ENCODE measurements at regions of chr18 and their contacts with region 1.

Region 1: GRCh38 chr18:12254136-12254829 is at the start of gene CIDEA:
- DNase-seq: no peak
- H3K4me3 ChIP-seq: peak within 1 kb of the TSS in 2 of 3 experiments; percentile 31 to 33
- H3K27ac ChIP-seq: peak within 1 kb of the TSS; percentile 62
- H3K4me1 ChIP-seq: peaks cover 46% of the 10 kb centered on the region
- H3K27me3 ChIP-seq: no peaks in the 10 kb centered on the region
- CTCF ChIP-seq: no peak
- total RNA-seq, gene CIDEA: 0.94 to 1.3 TPM

Region 2: GRCh38 chr18:12092398-12093229 is 161.7 kb before region 1 on chr18:
- CTCF ChIA-PET with region 1: no interaction called
- dilution Hi-C with region 1: loop called (anchors 5 kb)
- in situ Hi-C with region 1: no loop called
- intact Hi-C with region 1: no loop called
- DNase-seq: no peak
- H3K4me3 ChIP-seq: no peak overlapping the region
- H3K27ac ChIP-seq: no peak overlapping the region
- H3K4me1 ChIP-seq: no peaks in the 10 kb centered on the region
- H3K27me3 ChIP-seq: no peaks in the 10 kb centered on the region
- CTCF ChIP-seq: peak in 1 of 2 donors; percentile 38

Region 3: GRCh38 chr18:12159447-12159846 is 94.8 kb before region 1 on chr18:
- CTCF ChIA-PET with region 1: no interaction called
- dilution Hi-C with region 1: loop called (anchors 5 kb)
- in situ Hi-C with region 1: no loop called
- intact Hi-C with region 1: no loop called
- DNase-seq: peak; percentile 87
- H3K4me3 ChIP-seq: no peak overlapping the region
- H3K27ac ChIP-seq: no peak overlapping the region
- H3K4me1 ChIP-seq: no peaks in the 10 kb centered on the region
- H3K27me3 ChIP-seq: peaks cover 2% of the 10 kb centered on the region
- CTCF ChIP-seq: no peak

Region 4: DNA sequence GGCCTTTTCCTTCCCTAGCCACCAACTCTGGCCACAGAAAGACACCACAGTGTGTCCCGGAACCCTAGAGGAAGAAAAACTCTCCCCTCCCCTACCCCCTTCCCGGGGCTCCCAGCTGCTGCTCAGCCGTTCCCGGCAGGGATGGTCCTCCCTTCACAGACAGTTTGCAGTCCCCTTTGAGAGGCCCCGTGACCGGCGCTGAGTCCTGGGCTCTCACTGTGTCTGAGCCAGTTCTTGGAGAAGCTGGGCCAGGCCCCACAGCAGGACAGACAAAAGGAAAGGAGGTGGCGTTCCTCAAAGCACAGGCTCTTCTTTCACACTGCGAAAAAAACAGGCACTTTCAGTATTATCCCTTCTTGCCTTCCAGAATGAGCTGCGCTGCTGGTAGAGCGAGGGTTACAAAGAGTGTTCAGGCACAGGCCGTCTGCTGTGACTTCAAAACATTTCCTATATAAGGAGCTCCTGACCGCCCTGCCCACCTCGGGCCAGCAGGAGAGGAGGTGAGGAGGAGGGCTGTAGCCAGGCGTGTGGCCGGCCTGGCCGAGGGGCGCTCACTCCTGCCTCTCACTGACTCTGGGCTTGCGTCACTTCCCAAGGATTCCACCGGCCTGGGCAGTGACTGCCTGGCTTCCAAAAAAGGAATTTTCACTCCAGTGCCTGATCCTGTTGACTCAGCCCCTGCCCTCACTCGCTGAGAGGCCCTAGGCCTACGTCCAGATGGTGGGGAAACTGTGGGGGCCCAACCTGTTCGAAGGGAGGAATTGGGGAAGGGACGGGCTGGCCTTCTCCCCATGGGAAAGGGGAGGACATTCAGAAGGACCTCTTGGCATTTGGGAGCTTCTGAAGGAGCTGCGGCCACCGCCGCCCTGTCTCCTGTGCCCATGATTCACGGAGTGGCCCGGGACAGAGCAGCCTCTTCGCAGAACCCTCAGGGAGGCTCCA is 24.7 kb after region 1 on chr18:
- CTCF ChIA-PET with region 1: interaction called, 6 read pairs
- dilution Hi-C with region 1: no loop called
- in situ Hi-C with region 1: no loop called
- intact Hi-C with region 1: loop called (anchors 2 kb)
- DNase-seq: peak; percentile 87
- H3K4me3 ChIP-seq: peak overlapping the region; percentile 7 to 28 (median 18)
- H3K27ac ChIP-seq: peak overlapping the region; percentile 83
- H3K4me1 ChIP-seq: peaks cover 43% of the 10 kb centered on the region
- H3K27me3 ChIP-seq: no peaks in the 10 kb centered on the region
- CTCF ChIP-seq: no peak

Region 5: GRCh38 chr18:12287684-12288402 is 33.6 kb after region 1 on chr18:
- CTCF ChIA-PET with region 1: interaction called, 6 read pairs
- dilution Hi-C with region 1: no loop called
- in situ Hi-C with region 1: no loop called
- intact Hi-C with region 1: loop called (anchors 1 kb)
- DNase-seq: peak; percentile 98
- H3K4me3 ChIP-seq: peak overlapping the region; percentile 46 to 67 (median 58)
- H3K27ac ChIP-seq: peak overlapping the region; percentile 97
- H3K4me1 ChIP-seq: peaks cover 30% of the 10 kb centered on the region
- H3K27me3 ChIP-seq: no peaks in the 10 kb centered on the region
- CTCF ChIP-seq: peak in 1 of 2 donors; percentile 13